ENCODE measurements at regions of chr10 and their contacts with region 1.

Region 1: DNA sequence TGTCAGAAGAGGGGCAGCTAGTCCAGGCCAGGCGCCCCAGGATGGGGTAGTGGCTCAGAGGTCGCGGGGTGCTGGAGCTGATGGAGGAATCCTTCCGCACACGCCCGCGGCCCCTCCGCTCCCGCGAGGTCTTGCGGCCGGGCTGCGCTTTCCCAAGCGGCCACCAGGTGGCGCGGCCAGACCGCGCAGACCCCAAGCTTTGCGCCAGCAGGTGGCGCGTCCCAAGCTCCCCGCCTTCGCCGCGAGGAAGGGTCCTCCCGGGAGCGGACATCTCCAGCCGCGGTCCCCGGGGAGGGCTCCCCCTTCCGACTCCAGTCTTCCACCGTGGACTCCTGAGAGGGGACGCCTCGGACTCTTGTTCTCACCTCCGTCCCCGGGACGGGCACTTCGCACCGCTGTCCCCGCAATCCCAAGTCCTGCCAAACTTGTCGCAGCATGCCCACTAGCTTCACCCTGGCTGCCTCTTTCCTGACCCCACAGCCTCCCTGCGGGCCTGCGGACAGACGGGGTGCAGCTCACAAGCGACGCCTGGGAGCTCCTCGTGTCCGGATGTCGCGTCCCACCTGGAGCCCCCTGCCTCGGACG is 19.4 kb downstream of the KCNK18 start:
- DNase-seq: peak; percentile 77 to 90
- H3K4me3 ChIP-seq: peak overlapping the region; percentile 59
- H3K4me3 Mint-ChIP-seq: peak overlapping the region; percentile 90
- H3K27ac Mint-ChIP-seq: no peak overlapping the region
- H3K4me1 ChIP-seq: 0 out of 2 replicates have a peak, but pooled peaks cover 5% of the 10 kb centered on the region
- H3K4me1 Mint-ChIP-seq: no peaks in the 10 kb centered on the region
- H3K27me3 ChIP-seq: no peaks in the 10 kb centered on the region; the same call in 1 of the 2 replicates
- H3K27me3 Mint-ChIP-seq: peaks cover 13% of the 10 kb centered on the region
- CTCF ChIP-seq: peak; percentile 100

Region 2: GRCh38 chr10:117254774-117255735 is 38.4 kb after region 1 on chr10:
- CTCF ChIA-PET with region 1: no interaction called
- POLR2A ChIA-PET with region 1: no interaction called
- intact Hi-C with region 1: no loop called
- DNase-seq: no peak
- H3K4me3 ChIP-seq: no peak overlapping the region
- H3K4me3 Mint-ChIP-seq: no peak overlapping the region
- H3K27ac Mint-ChIP-seq: no peak overlapping the region
- H3K4me1 ChIP-seq: no peaks in the 10 kb centered on the region
- H3K4me1 Mint-ChIP-seq: no peaks in the 10 kb centered on the region
- H3K27me3 ChIP-seq: no peaks in the 10 kb centered on the region
- H3K27me3 Mint-ChIP-seq: peaks cover 11% of the 10 kb centered on the region
- CTCF ChIP-seq: no peak

Region 3: DNA sequence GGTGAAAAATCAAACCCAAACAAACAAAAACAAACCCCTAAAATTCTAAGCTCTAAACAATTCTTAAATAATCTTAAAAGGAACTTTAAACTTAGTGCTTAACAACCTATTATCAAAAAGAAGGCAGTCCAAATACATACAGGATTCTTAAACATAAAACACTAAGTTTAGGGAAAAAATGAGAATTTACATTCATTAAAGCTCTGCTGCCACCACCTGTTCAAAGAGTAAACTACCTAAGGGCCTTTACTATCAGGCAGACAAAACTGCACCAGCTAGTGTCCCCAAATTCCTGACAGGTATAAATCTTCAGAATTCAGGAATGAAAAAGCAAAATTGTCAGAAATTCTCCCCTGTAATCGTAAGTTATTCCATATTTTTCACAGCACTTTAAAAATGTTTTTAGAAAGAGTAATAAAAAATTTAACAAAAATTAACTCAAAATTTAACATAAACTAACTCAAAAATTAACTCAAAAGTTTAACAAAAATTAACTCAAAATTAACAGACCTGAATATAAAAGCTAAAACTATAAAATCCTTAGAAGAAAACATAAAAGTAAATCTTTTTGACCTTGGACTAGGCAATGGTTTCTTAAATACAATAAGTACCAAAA is 103.5 kb after region 1 on chr10:
- CTCF ChIA-PET with region 1: interaction called, 69 read pairs
- POLR2A ChIA-PET with region 1: no interaction called
- intact Hi-C with region 1: loop called (anchors 1 kb)
- DNase-seq: peak in 1 of 2 experiments; percentile 36
- H3K4me3 ChIP-seq: no peak overlapping the region
- H3K4me3 Mint-ChIP-seq: no peak overlapping the region
- H3K27ac Mint-ChIP-seq: no peak overlapping the region
- H3K4me1 ChIP-seq: no peaks in the 10 kb centered on the region
- H3K4me1 Mint-ChIP-seq: no peaks in the 10 kb centered on the region
- H3K27me3 ChIP-seq: no peaks in the 10 kb centered on the region
- H3K27me3 Mint-ChIP-seq: no peaks in the 10 kb centered on the region
- CTCF ChIP-seq: peak; percentile 54 to 76